ENCODE measurements at regions of chr7 and their contacts with region 1.

Region 1: DNA sequence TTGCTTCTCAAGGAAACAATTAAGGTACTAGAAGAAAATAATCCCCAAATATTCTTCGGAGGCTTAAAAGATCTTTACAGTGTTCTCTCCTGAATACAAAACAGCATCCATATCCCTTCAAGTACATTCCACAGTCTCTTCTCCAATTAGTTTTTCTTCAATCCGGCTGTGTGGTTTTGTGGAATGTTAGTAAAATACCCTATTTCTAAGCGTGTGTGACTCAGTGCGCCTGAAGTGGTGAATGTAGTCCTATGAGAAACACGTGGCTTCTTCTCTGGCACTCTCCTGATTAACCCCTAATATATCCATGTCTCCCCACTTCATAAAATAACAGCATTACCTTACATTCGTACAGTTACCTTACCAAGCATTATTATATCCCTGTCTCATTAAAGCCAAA is 570.2 kb downstream of the ARL4A start:
- DNase-seq: no peak
- H3K4me3 ChIP-seq: no peak overlapping the region
- H3K27ac ChIP-seq: no peak overlapping the region
- H3K4me1 ChIP-seq: no peaks in the 10 kb centered on the region
- H3K27me3 ChIP-seq: no peaks in the 10 kb centered on the region
- CTCF ChIP-seq: no peak
- EP300 ChIP-seq: no peak
- POLR2A ChIP-seq: no peak

Region 2: GRCh38 chr7:12630513-12630819 is 627.2 kb before region 1 on chr7:
- in situ Hi-C with region 1: loop called in 3 of 4 experiments (anchors 10 to 25 kb)
- intact Hi-C with region 1: loop called (anchors 5 kb)
- DNase-seq: no peak
- H3K4me3 ChIP-seq: no peak overlapping the region
- H3K27ac ChIP-seq: no peak overlapping the region
- H3K4me1 ChIP-seq: no peaks in the 10 kb centered on the region
- H3K27me3 ChIP-seq: no peaks in the 10 kb centered on the region
- CTCF ChIP-seq: no peak
- EP300 ChIP-seq: no peak
- POLR2A ChIP-seq: no peak

Measured in transverse colon (tissue), 4 donors.